A673 (cell line): ENCODE measurements at regions of chr6 and their contacts with region 1.

Region 1: DNA sequence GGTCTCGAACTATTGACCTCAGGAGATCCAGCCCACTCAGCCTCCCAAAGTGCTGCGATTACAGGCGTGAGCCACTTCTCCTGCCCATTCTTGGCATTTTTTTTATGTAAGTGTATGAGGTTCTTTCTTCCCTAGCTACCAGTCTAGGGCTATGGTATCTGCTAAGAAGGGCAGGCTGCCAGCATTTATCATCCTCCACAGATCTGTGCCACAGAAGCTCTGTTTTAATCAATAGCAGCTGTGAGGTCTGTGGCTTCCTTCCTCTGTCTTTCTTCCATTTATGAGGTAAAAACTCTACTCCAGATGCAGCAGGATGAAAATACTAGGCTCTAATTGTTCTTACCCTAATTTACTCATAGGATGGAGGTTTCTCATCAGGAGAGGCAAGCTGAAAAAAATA is 1382.4 kb upstream of the ADGRB3 start:
- DNase-seq: peak; percentile 83
- H3K4me3 ChIP-seq: no peak overlapping the region
- H3K27ac ChIP-seq: peak overlapping the region; percentile 34
- H3K4me1 ChIP-seq: peaks cover 17% of the 10 kb centered on the region
- H3K27me3 ChIP-seq: no peaks in the 10 kb centered on the region
- CTCF ChIP-seq: no peak

Region 2: GRCh38 chr6:66553441-66553840 is 699.2 kb before region 1 on chr6:
- CTCF ChIA-PET with region 1: no interaction called
- POLR2A ChIA-PET with region 1: no interaction called
- intact Hi-C with region 1: no loop called
- DNase-seq: no peak
- H3K4me3 ChIP-seq: no peak overlapping the region
- H3K27ac ChIP-seq: no peak overlapping the region
- H3K4me1 ChIP-seq: no peaks in the 10 kb centered on the region
- H3K27me3 ChIP-seq: no peaks in the 10 kb centered on the region
- CTCF ChIP-seq: no peak

Region 3: GRCh38 chr6:66926065-66926464 is 326.6 kb before region 1 on chr6:
- CTCF ChIA-PET with region 1: no interaction called
- POLR2A ChIA-PET with region 1: no interaction called
- intact Hi-C with region 1: loop called (anchors 10 kb)
- DNase-seq: peak; percentile 45
- H3K4me3 ChIP-seq: no peak overlapping the region
- H3K27ac ChIP-seq: no peak overlapping the region
- H3K4me1 ChIP-seq: no peaks in the 10 kb centered on the region
- H3K27me3 ChIP-seq: no peaks in the 10 kb centered on the region
- CTCF ChIP-seq: no peak

Region 4: GRCh38 chr6:67068781-67069180 is 183.9 kb before region 1 on chr6:
- CTCF ChIA-PET with region 1: no interaction called
- POLR2A ChIA-PET with region 1: no interaction called
- intact Hi-C with region 1: loop called (anchors 10 kb)
- DNase-seq: no peak
- H3K4me3 ChIP-seq: no peak overlapping the region
- H3K27ac ChIP-seq: no peak overlapping the region
- H3K4me1 ChIP-seq: no peaks in the 10 kb centered on the region
- H3K27me3 ChIP-seq: no peaks in the 10 kb centered on the region
- CTCF ChIP-seq: no peak

Region 5: GRCh38 chr6:67073938-67074337 is 178.7 kb before region 1 on chr6:
- CTCF ChIA-PET with region 1: interaction called, 11 read pairs
- POLR2A ChIA-PET with region 1: no interaction called
- intact Hi-C with region 1: loop called (anchors 10 kb)
- DNase-seq: no peak
- H3K4me3 ChIP-seq: no peak overlapping the region
- H3K27ac ChIP-seq: no peak overlapping the region
- H3K4me1 ChIP-seq: no peaks in the 10 kb centered on the region
- H3K27me3 ChIP-seq: no peaks in the 10 kb centered on the region
- CTCF ChIP-seq: no peak

Region 6: GRCh38 chr6:67094431-67094946 is 158.2 kb before region 1 on chr6:
- CTCF ChIA-PET with region 1: no interaction called
- POLR2A ChIA-PET with region 1: no interaction called
- intact Hi-C with region 1: loop called (anchors 1 kb)
- DNase-seq: peak; percentile 95
- H3K4me3 ChIP-seq: no peak overlapping the region
- H3K27ac ChIP-seq: peak overlapping the region; percentile 88
- H3K4me1 ChIP-seq: peaks cover 34% of the 10 kb centered on the region
- H3K27me3 ChIP-seq: no peaks in the 10 kb centered on the region
- CTCF ChIP-seq: no peak

Region 7: GRCh38 chr6:68226460-68226859 is 973.8 kb after region 1 on chr6:
- CTCF ChIA-PET with region 1: no interaction called
- POLR2A ChIA-PET with region 1: no interaction called
- intact Hi-C with region 1: loop called (anchors 10 kb)
- DNase-seq: peak; percentile 64
- H3K4me3 ChIP-seq: no peak overlapping the region
- H3K27ac ChIP-seq: no peak overlapping the region
- H3K4me1 ChIP-seq: peaks cover 11% of the 10 kb centered on the region
- H3K27me3 ChIP-seq: no peaks in the 10 kb centered on the region
- CTCF ChIP-seq: peak; percentile 74